CD4-positive, alpha-beta T cell (primary cell): ENCODE measurements at regions of chr3 and their contacts with region 1.

Region 1: GRCh38 chr3:111668912-111669488 is 73.9 kb upstream of the ZBED2 start:
- DNase-seq: peak in 3 of 14 experiments; percentile 68 to 73 (median 70)
- ATAC-seq: peak; percentile 44
- H3K4me3 ChIP-seq: no peak overlapping the region
- H3K4me3 Mint-ChIP-seq: peak overlapping the region; percentile 73
- H3K27ac ChIP-seq: peak overlapping the region in 1 of 2 donors; percentile 3
- H3K27ac Mint-ChIP-seq: peak overlapping the region; percentile 73
- H3K4me1 ChIP-seq: peaks cover 53% of the 10 kb centered on the region
- H3K4me1 Mint-ChIP-seq: peaks cover 68% of the 10 kb centered on the region
- H3K27me3 ChIP-seq: no peaks in the 10 kb centered on the region
- H3K27me3 Mint-ChIP-seq: no peaks in the 10 kb centered on the region
- CTCF ChIP-seq: peak; percentile 87

Region 2: GRCh38 chr3:111577794-111578685 is 91.0 kb before region 1 on chr3:
- CTCF ChIA-PET with region 1: interaction called, 10 read pairs
- POLR2A ChIA-PET with region 1: no interaction called
- intact Hi-C with region 1: no loop called
- DNase-seq: peak in 3 of 14 experiments; percentile 48 to 58 (median 50)
- ATAC-seq: peak; percentile 85
- H3K4me3 ChIP-seq: no peak overlapping the region
- H3K4me3 Mint-ChIP-seq: no peak overlapping the region
- H3K27ac ChIP-seq: no peak overlapping the region
- H3K27ac Mint-ChIP-seq: peak overlapping the region; percentile 24
- H3K4me1 ChIP-seq: no peaks in the 10 kb centered on the region
- H3K4me1 Mint-ChIP-seq: peaks cover 75% of the 10 kb centered on the region
- H3K27me3 ChIP-seq: no peaks in the 10 kb centered on the region
- H3K27me3 Mint-ChIP-seq: no peaks in the 10 kb centered on the region
- CTCF ChIP-seq: peak; percentile 17

Region 3: GRCh38 chr3:111616417-111617105 is 52.4 kb before region 1 on chr3:
- CTCF ChIA-PET with region 1: interaction called, 4 read pairs
- POLR2A ChIA-PET with region 1: interaction called, 10 read pairs
- intact Hi-C with region 1: loop called in 1 of 2 experiments (anchors 5 kb)
- DNase-seq: peak in 13 of 14 experiments; percentile 16 to 88 (median 46)
- ATAC-seq: peak; percentile 94
- H3K4me3 ChIP-seq: no peak overlapping the region
- H3K4me3 Mint-ChIP-seq: peak overlapping the region; percentile 26
- H3K27ac ChIP-seq: peak overlapping the region; percentile 27 to 60
- H3K27ac Mint-ChIP-seq: peak overlapping the region; percentile 86
- H3K4me1 ChIP-seq: peaks cover 32% of the 10 kb centered on the region
- H3K4me1 Mint-ChIP-seq: peaks cover 60% of the 10 kb centered on the region
- H3K27me3 ChIP-seq: no peaks in the 10 kb centered on the region
- H3K27me3 Mint-ChIP-seq: no peaks in the 10 kb centered on the region
- CTCF ChIP-seq: peak; percentile 31

Region 4: DNA sequence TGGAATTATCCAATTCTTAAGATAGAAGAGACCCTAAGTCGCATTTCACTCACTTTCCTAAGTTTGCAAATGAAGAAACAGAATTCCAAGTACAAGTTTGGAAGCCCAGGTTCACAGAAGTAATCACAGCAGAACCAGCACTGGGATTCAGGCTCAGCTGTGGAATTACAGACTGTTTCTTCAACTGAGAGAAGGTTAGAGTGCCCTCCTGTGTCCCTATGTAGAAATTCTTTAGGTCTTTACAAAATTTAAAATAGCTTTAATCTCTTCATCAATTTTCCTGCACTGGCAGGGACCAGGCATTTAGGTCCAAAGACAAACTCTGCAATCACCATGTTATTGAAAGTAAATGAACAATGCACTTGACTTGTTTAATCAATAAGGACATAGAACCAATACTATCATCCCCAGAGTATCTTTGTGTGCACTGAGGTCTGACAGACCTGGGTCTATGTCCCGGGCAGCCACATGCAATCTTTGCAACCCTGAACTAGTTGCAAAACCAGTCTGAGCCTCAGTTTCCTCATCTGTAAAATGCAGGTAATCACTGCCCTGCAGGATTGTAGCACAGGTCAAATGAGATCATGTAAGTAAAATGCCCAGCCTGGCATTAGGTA is 22.4 kb after region 1 on chr3:
- CTCF ChIA-PET with region 1: interaction called, 11 read pairs
- POLR2A ChIA-PET with region 1: interaction called, 50 read pairs
- intact Hi-C with region 1: loop called (anchors 1 kb)
- DNase-seq: peak in 3 of 14 experiments; percentile 45 to 63 (median 61)
- ATAC-seq: peak; percentile 64
- H3K4me3 ChIP-seq: no peak overlapping the region
- H3K4me3 Mint-ChIP-seq: no peak overlapping the region
- H3K27ac ChIP-seq: no peak overlapping the region
- H3K27ac Mint-ChIP-seq: peak overlapping the region; percentile 4
- H3K4me1 ChIP-seq: peaks cover 2% of the 10 kb centered on the region
- H3K4me1 Mint-ChIP-seq: peaks cover 58% of the 10 kb centered on the region
- H3K27me3 ChIP-seq: no peaks in the 10 kb centered on the region
- H3K27me3 Mint-ChIP-seq: no peaks in the 10 kb centered on the region
- CTCF ChIP-seq: peak; percentile 67

Region 5: DNA sequence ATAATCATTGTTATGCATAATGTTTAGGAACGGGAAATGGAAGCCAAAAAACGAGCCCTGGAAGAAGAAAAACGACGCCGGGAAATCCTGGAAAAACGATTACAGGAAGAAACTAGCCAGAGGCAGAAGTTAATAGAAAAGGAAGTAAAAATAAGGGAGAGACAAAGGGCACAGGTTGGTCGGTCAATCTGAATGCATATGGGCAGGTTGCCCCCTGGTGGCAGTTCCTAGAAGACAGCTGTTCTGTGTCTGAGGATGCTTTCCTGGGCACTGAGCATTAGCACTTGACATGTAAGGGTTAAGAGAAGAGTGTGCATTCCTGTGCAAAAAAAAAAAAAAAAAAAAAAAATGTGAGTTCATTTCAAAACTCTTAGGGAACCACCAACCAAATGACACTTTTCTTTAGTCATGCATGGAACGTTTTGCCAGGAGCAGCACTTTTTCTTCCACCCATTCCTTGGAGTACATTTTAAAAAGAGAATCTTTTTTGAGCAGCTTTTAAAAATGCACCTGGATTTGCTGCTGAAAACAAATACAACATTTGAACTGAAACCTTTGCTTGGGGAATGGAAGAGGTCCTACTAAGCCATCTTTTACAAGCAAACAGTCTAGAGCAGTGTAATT is 298.8 kb after region 1 on chr3:
- CTCF ChIA-PET with region 1: interaction called, 9 read pairs
- POLR2A ChIA-PET with region 1: interaction called, 10 read pairs
- intact Hi-C with region 1: loop called (anchors 1 to 2 kb)
- DNase-seq: peak; percentile 62 to 88 (median 72)
- ATAC-seq: peak; percentile 97
- H3K4me3 ChIP-seq: no peak overlapping the region
- H3K4me3 Mint-ChIP-seq: no peak overlapping the region
- H3K27ac ChIP-seq: no peak overlapping the region
- H3K27ac Mint-ChIP-seq: no peak overlapping the region
- H3K4me1 ChIP-seq: no peaks in the 10 kb centered on the region
- H3K4me1 Mint-ChIP-seq: peaks cover 5% of the 10 kb centered on the region
- H3K27me3 ChIP-seq: no peaks in the 10 kb centered on the region
- H3K27me3 Mint-ChIP-seq: no peaks in the 10 kb centered on the region
- CTCF ChIP-seq: peak; percentile 96